ENCODE measurements at regions of chr6 and their contacts with region 1.

Region 1: GRCh38 chr6:112626468-112627082 is 279.4 kb downstream of the RFPL4B start:
- DNase-seq: no peak
- H3K4me3 ChIP-seq: no peak overlapping the region
- H3K27ac ChIP-seq: no peak overlapping the region
- H3K4me1 ChIP-seq: peaks cover 4% of the 10 kb centered on the region
- H3K27me3 ChIP-seq: no peaks in the 10 kb centered on the region
- CTCF ChIP-seq: no peak
- POLR2A ChIP-seq: no peak

Region 2: DNA sequence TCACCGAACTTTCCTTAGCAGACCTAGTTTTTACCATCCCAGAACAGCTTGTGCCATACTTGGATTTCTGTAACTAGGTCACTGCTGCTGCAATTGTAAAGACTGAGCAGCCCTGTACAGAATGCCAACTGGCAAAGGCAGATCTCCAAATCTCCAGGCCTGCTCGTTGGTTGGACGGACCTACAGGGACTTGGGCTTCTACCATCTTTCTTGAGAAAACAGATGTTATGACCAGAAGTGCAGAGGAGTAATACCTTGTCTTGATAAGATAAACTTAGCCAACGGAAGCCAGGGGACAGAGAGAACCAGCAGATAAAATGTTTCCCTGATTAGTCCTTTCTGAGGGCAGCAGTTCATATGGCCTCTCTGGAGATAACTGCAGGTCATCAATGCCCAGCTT is 24.7 kb after region 1 on chr6:
- CTCF ChIA-PET with region 1: no interaction called
- POLR2A ChIA-PET with region 1: no interaction called
- dilution Hi-C with region 1: no loop called
- intact Hi-C with region 1: loop called (anchors 1 kb)
- DNase-seq: no peak
- H3K4me3 ChIP-seq: no peak overlapping the region
- H3K27ac ChIP-seq: no peak overlapping the region
- H3K4me1 ChIP-seq: peaks cover 25% of the 10 kb centered on the region
- H3K27me3 ChIP-seq: no peaks in the 10 kb centered on the region
- CTCF ChIP-seq: no peak
- POLR2A ChIP-seq: no peak

Region 3: DNA sequence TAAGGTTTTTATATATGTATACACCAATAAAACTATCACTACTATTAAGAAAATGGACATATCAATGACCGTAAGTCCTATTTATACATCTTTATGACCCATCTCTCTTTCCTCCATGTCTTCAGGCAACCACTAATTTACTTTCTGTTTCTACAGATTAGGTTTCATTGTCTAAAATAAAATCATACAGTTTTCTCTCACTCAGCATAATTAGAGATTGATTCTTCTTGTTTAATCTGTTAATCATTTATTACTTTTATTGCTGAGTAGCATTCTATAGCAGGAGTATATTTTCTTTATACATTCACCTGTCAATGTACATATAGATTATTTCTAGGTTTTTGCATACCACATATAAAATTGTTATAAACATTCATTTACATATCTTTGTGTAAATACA is 108.6 kb after region 1 on chr6:
- CTCF ChIA-PET with region 1: no interaction called
- POLR2A ChIA-PET with region 1: no interaction called
- dilution Hi-C with region 1: no loop called
- intact Hi-C with region 1: no loop called
- DNase-seq: no peak
- H3K4me3 ChIP-seq: no peak overlapping the region
- H3K27ac ChIP-seq: no peak overlapping the region
- H3K4me1 ChIP-seq: no peaks in the 10 kb centered on the region
- H3K27me3 ChIP-seq: no peaks in the 10 kb centered on the region
- CTCF ChIP-seq: no peak
- POLR2A ChIP-seq: no peak

Region 4: GRCh38 chr6:112946051-112946450 is 319.5 kb after region 1 on chr6:
- CTCF ChIA-PET with region 1: no interaction called
- POLR2A ChIA-PET with region 1: no interaction called
- dilution Hi-C with region 1: no loop called
- intact Hi-C with region 1: no loop called
- DNase-seq: no peak
- H3K4me3 ChIP-seq: no peak overlapping the region
- H3K27ac ChIP-seq: no peak overlapping the region
- H3K4me1 ChIP-seq: peaks cover 12% of the 10 kb centered on the region
- H3K27me3 ChIP-seq: no peaks in the 10 kb centered on the region
- CTCF ChIP-seq: no peak
- POLR2A ChIP-seq: no peak

Region 5: DNA sequence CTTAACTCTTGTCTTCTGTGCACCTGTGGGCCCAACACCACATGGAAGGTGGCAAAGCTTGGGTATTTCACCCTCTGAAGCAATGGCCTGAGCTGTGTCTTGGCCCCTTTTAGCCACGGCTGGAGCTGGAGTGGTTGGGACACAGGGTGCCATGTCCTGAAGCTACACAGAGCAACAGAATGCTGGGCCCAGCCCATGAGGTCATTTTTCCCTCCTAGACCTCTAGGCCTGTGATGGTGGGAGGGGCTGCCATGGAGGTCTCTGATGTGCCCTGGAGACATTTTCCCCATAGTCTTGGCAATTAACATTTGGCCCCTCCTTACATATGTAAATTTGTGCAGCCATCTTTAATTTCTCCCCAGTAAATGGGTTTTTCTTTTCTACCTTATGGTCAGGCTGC is 341.4 kb after region 1 on chr6:
- CTCF ChIA-PET with region 1: no interaction called
- POLR2A ChIA-PET with region 1: no interaction called
- dilution Hi-C with region 1: no loop called
- intact Hi-C with region 1: no loop called
- DNase-seq: no peak
- H3K4me3 ChIP-seq: no peak overlapping the region
- H3K27ac ChIP-seq: no peak overlapping the region
- H3K4me1 ChIP-seq: no peaks in the 10 kb centered on the region
- H3K27me3 ChIP-seq: no peaks in the 10 kb centered on the region
- CTCF ChIP-seq: no peak
- POLR2A ChIP-seq: no peak

Measured in endothelial cell of umbilical vein (primary cell).